Right ventricle myocardium inferior (tissue), 1 donor: ENCODE measurements at regions of chr18 and their contacts with region 1.

Region 1: GRCh38 chr18:53909668-53910067 is 314.8 kb downstream of the MBD2 start:
- DNase-seq: no peak
- ATAC-seq: no peak

Region 2: GRCh38 chr18:53799134-53799533 is 110.5 kb before region 1 on chr18:
- intact Hi-C with region 1: no loop called
- DNase-seq: no peak
- ATAC-seq: no peak

Region 3: GRCh38 chr18:53850918-53851317 is 58.8 kb before region 1 on chr18:
- intact Hi-C with region 1: no loop called
- DNase-seq: no peak
- ATAC-seq: no peak

Region 4: GRCh38 chr18:54033052-54033451 is 123.4 kb after region 1 on chr18:
- intact Hi-C with region 1: loop called (anchors 5 kb)
- DNase-seq: no peak
- ATAC-seq: no peak